ENCODE measurements at regions of chr14 and their contacts with region 1.

Region 1: DNA sequence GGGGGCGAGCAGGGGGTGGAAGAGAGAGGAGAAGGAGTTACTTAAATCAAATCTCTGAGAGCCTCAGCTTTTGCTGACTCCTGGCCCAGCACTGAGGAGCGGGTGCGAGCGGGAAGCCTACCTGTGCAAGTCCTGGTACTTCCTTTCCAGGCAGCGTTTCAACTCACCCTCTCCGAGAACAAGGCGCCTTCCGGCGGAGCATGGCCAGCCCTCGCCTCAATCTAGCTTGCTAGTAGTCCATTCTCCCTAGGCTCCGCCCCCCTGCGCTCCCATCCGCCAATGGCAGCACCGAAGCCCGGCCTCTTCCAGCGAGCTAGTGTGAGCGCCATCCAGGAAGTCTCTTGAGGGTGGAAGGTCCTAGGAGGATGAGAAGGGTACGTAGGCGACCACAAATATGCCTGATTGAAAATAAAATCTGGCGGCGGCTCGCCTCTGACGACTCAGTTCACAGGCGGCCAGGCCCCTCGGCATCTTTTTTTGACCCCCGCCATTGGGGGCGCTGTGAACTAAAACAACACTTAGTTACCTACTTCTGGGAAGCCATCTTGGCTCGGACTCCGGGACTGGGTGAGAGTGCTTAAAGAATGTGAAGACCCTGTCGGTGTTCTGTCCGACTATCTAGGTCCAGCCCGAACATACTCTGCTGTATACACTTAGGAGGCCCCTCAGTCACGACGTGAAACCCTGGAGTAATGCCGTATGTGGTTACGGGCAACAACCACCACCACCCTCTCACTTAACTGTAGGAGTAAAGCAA is at the start of gene CHD8:
- DNase-seq: peak; percentile 99
- ATAC-seq: peak; percentile 98
- H3K4me3 ChIP-seq: peak within 1 kb of the TSS; percentile 97
- H3K27ac ChIP-seq: peak within 1 kb of the TSS; percentile 94
- H3K4me1 ChIP-seq: peaks cover 7% of the 10 kb centered on the region
- H3K27me3 ChIP-seq: no peaks in the 10 kb centered on the region
- CTCF ChIP-seq: peak; percentile 60 to 79 (median 79)
- EP300 ChIP-seq: 0 out of 4 replicates have a peak, but pooled peaks of 1 of the 2 experiments have one; percentile 8
- POLR2A ChIP-seq: peak; percentile 94
- RAD21 ChIP-seq: peak; percentile 45
- polyA plus RNA-seq, gene CHD8: 20.2 to 28.2 TPM

Region 2: GRCh38 chr14:20904393-20905029 is 551.6 kb before region 1 on chr14:
- CTCF ChIA-PET with region 1: no interaction called
- POLR2A ChIA-PET with region 1: no interaction called
- RAD21 ChIA-PET with region 1: no interaction called
- SMC1A ChIA-PET with region 1: no interaction called
- in situ Hi-C with region 1: no loop called
- intact Hi-C with region 1: no loop called
- DNase-seq: no peak
- ATAC-seq: no peak
- H3K4me3 ChIP-seq: no peak overlapping the region
- H3K27ac ChIP-seq: no peak overlapping the region
- H3K4me1 ChIP-seq: no peaks in the 10 kb centered on the region
- H3K27me3 ChIP-seq: no peaks in the 10 kb centered on the region
- CTCF ChIP-seq: no peak
- EP300 ChIP-seq: no peak
- POLR2A ChIP-seq: no peak
- RAD21 ChIP-seq: no peak

Region 3: DNA sequence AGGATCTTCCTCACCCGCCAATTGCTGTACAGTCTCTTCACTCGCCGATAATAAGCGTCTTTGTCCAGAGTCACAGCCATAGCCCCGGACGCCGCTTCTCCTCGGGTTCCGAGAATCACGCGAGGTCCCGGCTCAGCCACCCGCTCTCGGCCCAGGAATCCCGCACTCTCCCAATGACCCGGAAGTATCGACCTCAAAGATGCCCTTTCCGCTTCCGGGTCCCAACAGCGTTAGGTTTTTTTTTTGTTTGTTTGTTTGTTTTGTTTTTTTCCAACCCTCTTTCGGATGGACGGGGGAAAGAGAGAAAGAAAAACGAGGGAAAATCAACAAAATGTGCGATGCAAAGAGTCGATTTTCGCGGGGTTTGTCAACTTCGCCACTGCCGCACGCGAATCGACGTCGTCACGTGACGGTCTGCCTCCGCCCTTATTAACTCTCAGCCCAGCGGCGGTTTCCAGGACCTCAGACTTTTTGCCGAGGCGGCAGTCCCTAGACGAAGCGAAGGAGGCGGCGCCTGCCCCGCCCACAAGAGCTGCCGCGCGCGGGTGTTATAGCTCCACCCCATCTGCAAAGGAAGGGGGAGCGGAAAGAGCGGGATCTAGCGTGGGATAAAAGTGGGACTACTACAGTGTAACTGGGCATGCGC is 72.1 kb before region 1 on chr14 and contains the start of gene SUPT16H:
- CTCF ChIA-PET with region 1: interaction called, 3 read pairs
- POLR2A ChIA-PET with region 1: interaction called, 7 read pairs
- RAD21 ChIA-PET with region 1: interaction called, 8 read pairs
- SMC1A ChIA-PET with region 1: interaction called, 6 read pairs
- in situ Hi-C with region 1: no loop called
- intact Hi-C with region 1: loop called (anchors 2 kb)
- DNase-seq: peak; percentile 71
- ATAC-seq: peak; percentile 91
- H3K4me3 ChIP-seq: peak within 1 kb of the TSS; percentile 95
- H3K27ac ChIP-seq: peak within 1 kb of the TSS; percentile 94
- H3K4me1 ChIP-seq: peaks cover 9% of the 10 kb centered on the region
- H3K27me3 ChIP-seq: no peaks in the 10 kb centered on the region
- CTCF ChIP-seq: no peak
- EP300 ChIP-seq: no peak
- POLR2A ChIP-seq: peak; percentile 64
- RAD21 ChIP-seq: no peak
- polyA plus RNA-seq, gene SUPT16H: 90.7 to 106 TPM

Region 4: GRCh38 chr14:21437063-21437901 is 18.8 kb before region 1 on chr14:
- CTCF ChIA-PET with region 1: interaction called, 38 read pairs
- POLR2A ChIA-PET with region 1: interaction called, 82 read pairs
- RAD21 ChIA-PET with region 1: interaction called, 46 read pairs
- SMC1A ChIA-PET with region 1: interaction called, 23 read pairs
- in situ Hi-C with region 1: no loop called
- intact Hi-C with region 1: loop called (anchors 1 kb)
- DNase-seq: peak; percentile 94
- ATAC-seq: peak; percentile 99
- H3K4me3 ChIP-seq: peak overlapping the region; percentile 78
- H3K27ac ChIP-seq: peak overlapping the region; percentile 79
- H3K4me1 ChIP-seq: peaks cover 2% of the 10 kb centered on the region; the same call in 1 of the 2 replicates
- H3K27me3 ChIP-seq: no peaks in the 10 kb centered on the region
- CTCF ChIP-seq: no peak
- EP300 ChIP-seq: no peak
- POLR2A ChIP-seq: peak; percentile 90
- RAD21 ChIP-seq: no peak

Region 5: DNA sequence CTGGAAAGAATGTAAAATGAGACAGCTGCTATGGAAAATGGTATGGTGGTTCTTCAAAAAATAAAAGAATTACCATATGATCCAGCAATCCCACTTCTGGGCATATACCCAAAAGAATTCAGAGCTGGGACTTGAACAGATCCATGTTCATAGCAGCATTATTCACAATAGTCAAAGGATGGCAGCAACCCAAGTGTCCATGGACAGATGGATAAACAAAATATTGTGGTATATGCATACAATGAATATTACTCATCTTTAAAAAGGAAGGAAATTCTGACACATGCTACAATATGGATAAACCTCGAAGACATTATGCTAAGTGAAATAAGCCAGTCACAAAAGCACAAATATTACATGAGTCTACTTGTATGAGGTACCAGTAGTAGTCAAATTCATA is 11.5 kb after region 1 on chr14:
- CTCF ChIA-PET with region 1: interaction called, 12 read pairs
- POLR2A ChIA-PET with region 1: interaction called, 5 read pairs
- RAD21 ChIA-PET with region 1: no interaction called
- SMC1A ChIA-PET with region 1: interaction called, 6 read pairs
- in situ Hi-C with region 1: no loop called
- intact Hi-C with region 1: no loop called
- DNase-seq: no peak
- ATAC-seq: no peak
- H3K4me3 ChIP-seq: no peak overlapping the region
- H3K27ac ChIP-seq: no peak overlapping the region
- H3K4me1 ChIP-seq: no peaks in the 10 kb centered on the region
- H3K27me3 ChIP-seq: no peaks in the 10 kb centered on the region
- CTCF ChIP-seq: no peak
- EP300 ChIP-seq: no peak
- POLR2A ChIP-seq: no peak
- RAD21 ChIP-seq: no peak

Region 6: DNA sequence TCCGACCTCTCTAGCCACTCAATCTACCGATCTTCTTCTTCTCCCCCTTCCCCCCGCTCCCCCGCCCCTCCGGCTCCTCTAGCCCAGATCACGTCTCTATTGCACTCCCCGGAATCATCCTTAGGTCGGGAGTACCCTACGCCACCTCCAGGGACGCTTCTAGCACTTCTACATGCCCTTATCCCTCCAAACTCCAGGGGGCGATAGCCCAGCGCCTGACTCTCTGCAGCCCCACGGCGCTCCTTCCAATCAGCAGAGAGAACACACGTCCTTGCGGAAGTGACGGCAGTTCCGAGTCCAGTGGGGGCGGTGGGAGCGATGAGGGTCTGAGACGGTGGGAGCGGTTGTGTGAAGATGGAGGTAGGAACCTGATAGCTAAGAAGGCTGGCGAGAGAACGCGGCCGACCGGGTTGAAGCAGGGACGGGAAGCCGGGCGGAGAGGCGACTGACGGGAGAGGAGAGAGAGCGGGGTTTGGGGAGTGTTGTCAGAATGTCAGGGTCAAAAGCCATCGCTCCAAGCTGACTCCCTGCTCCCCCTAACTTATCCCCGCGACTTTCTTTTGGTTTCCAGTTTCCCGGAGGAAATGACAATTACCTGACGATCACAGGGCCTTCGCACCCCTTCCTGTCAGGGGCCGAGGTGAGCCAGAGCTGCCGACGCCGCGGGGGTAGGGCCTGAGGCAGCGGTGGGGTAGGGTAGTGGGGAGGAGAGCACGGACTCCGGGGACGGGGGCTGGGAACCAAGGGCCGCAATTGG is 21.0 kb after region 1 on chr14 and contains the starts of genes RAB2B and TOX4:
- CTCF ChIA-PET with region 1: interaction called, 31 read pairs
- POLR2A ChIA-PET with region 1: interaction called, 6 read pairs
- RAD21 ChIA-PET with region 1: interaction called, 6 read pairs
- SMC1A ChIA-PET with region 1: interaction called, 3 read pairs
- in situ Hi-C with region 1: no loop called
- intact Hi-C with region 1: loop called (anchors 1 kb)
- DNase-seq: peak; percentile 94
- ATAC-seq: peak; percentile 98
- H3K4me3 ChIP-seq: peak within 1 kb of the TSS; percentile 99
- H3K27ac ChIP-seq: peak within 1 kb of the TSS; percentile 77
- H3K4me1 ChIP-seq: peaks cover 5% of the 10 kb centered on the region
- H3K27me3 ChIP-seq: no peaks in the 10 kb centered on the region
- CTCF ChIP-seq: peak; percentile 98 to 99 (median 99)
- EP300 ChIP-seq: peak in 1 of 2 experiments; percentile 46; a peak in 1 of 4 replicates
- POLR2A ChIP-seq: peak; percentile 91
- RAD21 ChIP-seq: peak; percentile 40; the same call in 1 of the 2 replicates
- polyA plus RNA-seq, gene RAB2B: 5.6 to 9.8 TPM
- polyA plus RNA-seq, gene TOX4: 54.7 to 55.5 TPM

Region 7: GRCh38 chr14:21510735-21511657 is 54.9 kb after region 1 on chr14 and contains the start of gene METTL3:
- CTCF ChIA-PET with region 1: interaction called, 4 read pairs
- POLR2A ChIA-PET with region 1: interaction called, 5 read pairs
- RAD21 ChIA-PET with region 1: interaction called, 8 read pairs
- SMC1A ChIA-PET with region 1: interaction called, 5 read pairs
- in situ Hi-C with region 1: no loop called
- intact Hi-C with region 1: loop called (anchors 2 kb)
- DNase-seq: peak; percentile 97
- ATAC-seq: peak; percentile 98
- H3K4me3 ChIP-seq: peak within 1 kb of the TSS; percentile 94
- H3K27ac ChIP-seq: peak within 1 kb of the TSS; percentile 82
- H3K4me1 ChIP-seq: no peaks in the 10 kb centered on the region; the same call in 1 of the 2 replicates
- H3K27me3 ChIP-seq: no peaks in the 10 kb centered on the region
- CTCF ChIP-seq: no peak
- EP300 ChIP-seq: no peak
- POLR2A ChIP-seq: peak; percentile 87
- RAD21 ChIP-seq: no peak
- polyA plus RNA-seq, gene METTL3: 32.8 to 36.0 TPM

Region 8: DNA sequence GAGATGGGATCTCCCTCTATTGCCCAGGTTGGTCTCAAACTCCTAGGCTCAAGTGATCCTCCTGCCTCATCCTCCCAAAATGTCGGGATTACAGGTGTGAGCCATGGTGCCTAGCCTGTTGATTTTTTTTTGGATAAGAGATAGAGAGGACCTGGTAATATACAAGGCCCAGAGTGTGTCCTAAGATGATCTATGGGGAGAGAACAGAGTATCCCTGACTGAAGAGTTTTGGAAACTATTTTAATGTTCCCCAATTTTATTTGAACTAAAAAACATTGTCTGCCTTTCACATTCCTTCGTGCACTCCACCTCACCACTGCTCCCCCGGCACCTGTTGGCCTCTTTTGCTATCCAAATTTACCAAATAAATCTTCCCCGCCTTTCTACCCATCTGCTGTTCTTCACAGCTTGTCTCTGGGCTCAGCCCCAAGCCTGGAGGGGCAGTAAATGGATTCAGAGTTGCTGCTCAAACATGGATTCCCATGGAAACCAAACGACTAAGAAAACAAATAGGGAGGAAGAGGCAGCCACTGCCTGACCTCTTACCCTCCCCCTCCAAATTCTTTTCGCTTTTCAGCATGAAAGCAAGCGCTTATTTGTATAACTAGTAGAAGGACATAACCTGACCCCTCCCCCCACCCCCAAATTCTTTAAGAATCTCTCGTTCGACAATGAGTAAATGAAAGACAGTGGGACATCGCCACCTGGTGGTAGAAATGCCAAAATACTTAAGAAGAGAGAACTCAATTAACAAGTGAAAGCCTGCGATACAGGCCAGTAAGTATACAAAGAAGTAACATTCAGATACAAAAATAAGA is 101.2 kb after region 1 on chr14:
- CTCF ChIA-PET with region 1: interaction called, 3 read pairs
- POLR2A ChIA-PET with region 1: interaction called, 4 read pairs
- RAD21 ChIA-PET with region 1: interaction called, 7 read pairs
- SMC1A ChIA-PET with region 1: interaction called, 3 read pairs
- in situ Hi-C with region 1: no loop called
- intact Hi-C with region 1: loop called (anchors 1 kb)
- DNase-seq: peak; percentile 61
- ATAC-seq: peak; percentile 87
- H3K4me3 ChIP-seq: peak overlapping the region; percentile 4; the same call in 1 of the 2 replicates
- H3K27ac ChIP-seq: no peak overlapping the region
- H3K4me1 ChIP-seq: no peaks in the 10 kb centered on the region
- H3K27me3 ChIP-seq: no peaks in the 10 kb centered on the region
- CTCF ChIP-seq: peak; percentile 48 to 74 (median 69)
- EP300 ChIP-seq: no peak
- POLR2A ChIP-seq: no peak
- RAD21 ChIP-seq: peak; percentile 92

Region 9: DNA sequence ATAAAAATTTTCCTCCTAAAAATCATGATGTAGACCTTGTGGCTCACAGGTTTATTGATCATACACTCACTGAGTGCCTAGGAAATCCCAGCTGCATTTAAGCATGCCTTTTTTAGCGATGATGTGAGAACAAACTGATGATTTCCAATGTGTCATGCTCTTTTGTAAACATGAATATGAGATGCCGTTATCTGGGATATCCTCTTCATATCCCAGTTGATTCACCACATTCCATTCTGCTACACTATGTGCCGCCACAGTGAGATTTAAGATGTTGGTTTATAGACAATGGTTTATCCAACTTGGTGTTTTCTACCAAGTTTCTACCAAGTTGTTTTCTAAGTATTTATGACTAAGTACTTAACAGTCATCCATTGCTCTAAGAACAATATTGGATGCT is 212.3 kb after region 1 on chr14:
- CTCF ChIA-PET with region 1: no interaction called
- POLR2A ChIA-PET with region 1: no interaction called
- RAD21 ChIA-PET with region 1: no interaction called
- SMC1A ChIA-PET with region 1: no interaction called
- in situ Hi-C with region 1: no loop called
- intact Hi-C with region 1: no loop called
- DNase-seq: no peak
- ATAC-seq: no peak
- H3K4me3 ChIP-seq: no peak overlapping the region
- H3K27ac ChIP-seq: no peak overlapping the region
- H3K4me1 ChIP-seq: no peaks in the 10 kb centered on the region
- H3K27me3 ChIP-seq: peaks cover 0 to 1% of the 10 kb centered on the region in 2 experiments; a peak in 1 of 4 replicates
- CTCF ChIP-seq: no peak
- EP300 ChIP-seq: no peak
- POLR2A ChIP-seq: no peak
- RAD21 ChIP-seq: no peak

Region 10: DNA sequence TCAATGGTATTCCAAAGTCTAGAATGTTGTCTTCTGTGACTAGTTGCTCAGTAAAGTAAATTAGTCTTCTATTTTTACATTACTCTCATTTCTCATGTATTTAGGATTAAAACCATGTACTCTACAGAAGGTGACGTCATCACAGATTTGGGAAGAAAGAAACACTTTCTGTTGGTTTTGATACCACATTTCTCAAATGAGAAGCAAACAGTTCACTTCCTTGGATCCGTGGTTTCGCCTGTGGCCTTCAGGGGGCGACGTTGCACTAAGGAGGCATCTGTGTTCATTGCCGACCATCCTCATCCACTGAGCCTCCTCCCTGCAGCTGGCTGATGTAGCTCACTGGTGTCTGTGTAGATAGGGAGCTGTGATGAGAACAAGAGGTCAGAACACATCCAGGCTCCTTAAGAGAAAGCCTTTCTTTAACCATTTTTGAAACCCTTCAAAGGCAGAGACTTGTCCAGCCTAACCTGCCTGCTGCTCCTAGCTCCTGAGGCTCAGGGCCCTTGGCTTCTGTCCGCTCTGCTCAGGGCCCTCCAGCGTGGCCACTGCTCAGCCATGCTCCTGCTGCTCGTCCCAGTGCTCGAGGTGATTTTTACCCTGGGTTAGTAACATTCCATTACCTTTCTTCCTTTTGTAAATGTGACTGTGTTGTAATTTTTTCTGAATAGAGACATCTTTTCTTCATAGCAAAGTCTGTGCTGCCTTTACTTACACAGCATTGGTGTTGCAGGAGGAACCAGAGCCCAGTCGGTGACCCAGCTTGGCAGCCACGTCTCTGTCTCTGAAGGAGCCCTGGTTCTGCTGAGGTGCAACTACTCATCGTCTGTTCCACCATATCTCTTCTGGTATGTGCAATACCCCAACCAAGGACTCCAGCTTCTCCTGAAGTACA is 438.2 kb after region 1 on chr14:
- CTCF ChIA-PET with region 1: no interaction called
- POLR2A ChIA-PET with region 1: no interaction called
- RAD21 ChIA-PET with region 1: no interaction called
- SMC1A ChIA-PET with region 1: no interaction called
- in situ Hi-C with region 1: no loop called
- intact Hi-C with region 1: no loop called
- DNase-seq: no peak
- ATAC-seq: peak; percentile 63
- H3K4me3 ChIP-seq: no peak overlapping the region
- H3K27ac ChIP-seq: no peak overlapping the region
- H3K4me1 ChIP-seq: no peaks in the 10 kb centered on the region
- H3K27me3 ChIP-seq: no peaks in the 10 kb centered on the region
- CTCF ChIP-seq: peak; percentile 17 to 47 (median 46); a peak in 4 of 6 replicates
- EP300 ChIP-seq: no peak
- POLR2A ChIP-seq: no peak
- RAD21 ChIP-seq: 0 out of 2 replicates have a peak, but pooled peaks have one; percentile 4

Measured in GM12878 (cell line).